ENCODE measurements at regions of chr1 and their contacts with region 1.

Region 1: DNA sequence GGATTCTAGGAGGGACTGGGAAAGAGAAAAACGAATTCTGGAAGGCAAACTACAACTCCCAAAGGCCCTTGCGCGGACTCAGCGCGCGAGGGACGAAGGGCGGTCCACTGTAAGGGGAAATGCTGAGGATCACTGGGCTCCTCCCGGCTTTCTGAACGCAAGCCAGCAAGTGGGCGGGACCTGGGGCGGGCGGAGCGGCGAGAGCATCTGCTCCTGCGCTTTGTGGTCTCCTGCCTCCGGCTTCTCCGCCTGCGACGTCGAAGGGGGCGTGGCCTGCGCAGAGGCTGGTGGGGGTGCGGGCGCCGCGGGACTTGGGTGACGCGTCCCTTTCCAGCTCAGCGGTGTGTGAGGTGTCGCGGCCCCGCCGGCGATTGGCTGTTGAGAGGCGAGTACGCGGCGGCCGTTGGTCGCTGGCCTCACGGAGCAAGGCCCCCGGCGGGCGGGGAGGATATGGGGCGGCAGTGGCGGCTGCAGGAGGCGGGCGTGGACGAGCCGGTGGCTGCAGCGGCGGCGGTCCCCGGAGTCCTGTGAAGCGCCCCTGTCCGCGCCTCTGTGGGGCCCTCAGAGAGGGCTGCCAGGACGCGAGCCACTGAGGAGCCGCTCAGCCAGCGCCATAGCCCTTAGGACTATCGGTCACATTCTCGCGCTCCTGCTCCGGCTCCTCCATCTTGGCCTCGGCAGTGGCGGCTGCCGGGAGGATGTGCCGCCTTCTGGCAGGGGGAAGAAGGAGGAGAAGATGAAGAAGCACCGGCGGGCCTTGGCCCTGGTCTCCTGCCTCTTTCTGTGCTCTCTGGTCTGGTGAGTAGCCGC is at the start of gene SUCO:
- DNase-seq: peak; percentile 99
- ATAC-seq: peak; percentile 82
- H3K4me3 Mint-ChIP-seq: peak within 1 kb of the TSS; percentile 98
- H3K27ac Mint-ChIP-seq: peak within 1 kb of the TSS; percentile 99
- H3K4me1 Mint-ChIP-seq: peaks cover 48% of the 10 kb centered on the region
- H3K27me3 Mint-ChIP-seq: peaks cover 4% of the 10 kb centered on the region
- CTCF ChIP-seq: no peak
- total RNA-seq, gene SUCO: 35.2 and 47.1 TPM in 2 replicates

Region 2: GRCh38 chr1:171485375-171486047 is 1047.4 kb before region 1 on chr1 and contains the start of gene PRRC2C:
- CTCF ChIA-PET with region 1: no interaction called
- POLR2A ChIA-PET with region 1: interaction called, 4 read pairs
- intact Hi-C with region 1: loop called (anchors 1 kb)
- DNase-seq: peak; percentile 81
- ATAC-seq: peak; percentile 86
- H3K4me3 Mint-ChIP-seq: peak within 1 kb of the TSS; percentile 94
- H3K27ac Mint-ChIP-seq: peak within 1 kb of the TSS; percentile 94
- H3K4me1 Mint-ChIP-seq: peaks cover 56% of the 10 kb centered on the region
- H3K27me3 Mint-ChIP-seq: no peaks in the 10 kb centered on the region
- CTCF ChIP-seq: no peak
- total RNA-seq, gene PRRC2C: 262 and 272 TPM in 2 replicates

Region 3: DNA sequence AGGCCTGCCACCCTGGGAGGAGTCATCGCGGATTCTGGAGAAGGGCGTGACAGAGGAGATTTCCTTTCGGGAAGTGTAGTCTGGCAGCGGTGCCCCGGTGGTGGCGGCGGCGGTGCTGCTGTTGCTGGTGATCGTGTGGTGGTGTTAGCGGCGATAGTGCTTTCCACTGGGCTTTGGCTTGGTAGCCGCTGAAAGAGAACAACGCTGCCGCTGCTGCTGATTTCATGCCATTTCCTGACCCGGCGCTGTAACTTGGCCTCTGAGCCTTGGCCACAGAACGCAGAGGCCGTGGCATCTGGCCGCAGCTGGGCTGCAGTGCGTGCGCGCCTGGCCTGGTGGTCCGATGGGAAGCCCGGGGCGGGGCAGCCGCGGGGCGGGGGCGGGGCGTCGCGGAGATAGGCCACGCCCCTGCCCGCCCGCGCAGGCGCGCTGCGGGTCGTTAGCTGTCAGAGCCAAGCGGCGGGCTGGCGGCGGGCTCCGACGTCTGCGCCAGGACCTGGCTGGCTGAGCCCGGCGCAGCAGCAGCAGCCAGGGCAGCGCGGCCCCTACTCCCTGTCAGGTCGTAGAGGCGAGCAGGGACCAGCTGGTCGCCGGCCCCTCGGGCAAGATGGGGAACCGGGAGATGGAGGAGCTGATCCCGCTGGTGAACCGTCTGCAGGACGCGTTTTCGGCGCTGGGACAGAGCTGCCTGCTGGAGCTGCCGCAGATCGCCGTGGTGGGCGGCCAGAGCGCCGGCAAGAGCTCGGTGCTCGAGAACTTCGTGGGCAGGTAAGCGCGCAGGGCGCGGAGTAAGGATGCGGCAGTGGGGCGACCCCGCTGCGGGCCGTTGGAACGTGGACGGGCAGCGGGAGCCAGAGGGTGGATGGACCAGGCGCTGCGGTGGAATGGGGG is 691.6 kb before region 1 on chr1 and contains the start of gene DNM3:
- CTCF ChIA-PET with region 1: no interaction called
- POLR2A ChIA-PET with region 1: interaction called, 3 read pairs
- intact Hi-C with region 1: loop called (anchors 5 kb)
- DNase-seq: peak; percentile 91
- ATAC-seq: peak; percentile 94
- H3K4me3 Mint-ChIP-seq: peak within 1 kb of the TSS; percentile 85
- H3K27ac Mint-ChIP-seq: peak within 1 kb of the TSS; percentile 36
- H3K4me1 Mint-ChIP-seq: peaks cover 18% of the 10 kb centered on the region
- H3K27me3 Mint-ChIP-seq: peaks cover 20% of the 10 kb centered on the region
- CTCF ChIP-seq: no peak
- total RNA-seq, gene DNM3: 1.9 and 2.1 TPM in 2 replicates

Region 4: GRCh38 chr1:172398970-172399755 is 133.7 kb before region 1 on chr1:
- CTCF ChIA-PET with region 1: no interaction called
- POLR2A ChIA-PET with region 1: interaction called, 4 read pairs
- intact Hi-C with region 1: loop called (anchors 1 kb)
- DNase-seq: no peak
- ATAC-seq: peak; percentile 50
- H3K4me3 Mint-ChIP-seq: peak overlapping the region; percentile 73
- H3K27ac Mint-ChIP-seq: peak overlapping the region; percentile 90
- H3K4me1 Mint-ChIP-seq: peaks cover 62% of the 10 kb centered on the region
- H3K27me3 Mint-ChIP-seq: no peaks in the 10 kb centered on the region
- CTCF ChIP-seq: no peak

Region 5: DNA sequence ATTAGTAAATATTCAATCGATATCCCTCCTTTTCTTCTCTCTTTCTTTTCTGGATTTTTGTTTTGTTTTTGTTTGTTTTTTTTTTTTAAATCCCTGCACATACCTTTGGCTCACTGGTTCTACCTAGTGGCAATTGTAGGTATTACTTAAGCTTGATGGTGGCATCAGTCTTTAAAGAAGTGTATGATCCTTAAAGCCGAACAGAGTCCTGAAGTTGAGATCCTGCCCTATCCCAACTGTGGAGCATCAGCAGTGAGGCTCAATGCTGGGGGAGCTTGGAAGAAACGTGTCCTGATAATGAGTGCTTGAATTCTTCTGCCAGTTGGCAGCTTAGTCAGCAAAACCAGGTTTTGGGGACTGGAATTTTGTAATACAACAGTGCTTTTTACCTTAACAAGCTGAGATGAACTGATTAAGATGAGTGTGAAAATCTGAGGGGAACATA is 186.8 kb after region 1 on chr1:
- CTCF ChIA-PET with region 1: interaction called, 3 read pairs
- POLR2A ChIA-PET with region 1: interaction called, 4 read pairs
- intact Hi-C with region 1: loop called (anchors 2 kb)
- DNase-seq: no peak
- ATAC-seq: peak; percentile 77
- H3K4me3 Mint-ChIP-seq: no peak overlapping the region
- H3K27ac Mint-ChIP-seq: peak overlapping the region; percentile 25
- H3K4me1 Mint-ChIP-seq: peaks cover 10% of the 10 kb centered on the region
- H3K27me3 Mint-ChIP-seq: no peaks in the 10 kb centered on the region
- CTCF ChIP-seq: peak; percentile 64

Region 6: GRCh38 chr1:173714759-173715537 is 1182.0 kb after region 1 on chr1 and contains the start of gene KLHL20:
- CTCF ChIA-PET with region 1: no interaction called
- POLR2A ChIA-PET with region 1: interaction called, 6 read pairs
- intact Hi-C with region 1: loop called (anchors 5 kb)
- DNase-seq: peak; percentile 71
- ATAC-seq: peak; percentile 96
- H3K4me3 Mint-ChIP-seq: peak within 1 kb of the TSS; percentile 93
- H3K27ac Mint-ChIP-seq: peak within 1 kb of the TSS; percentile 89
- H3K4me1 Mint-ChIP-seq: peaks cover 22% of the 10 kb centered on the region
- H3K27me3 Mint-ChIP-seq: peaks cover 14% of the 10 kb centered on the region
- CTCF ChIP-seq: no peak
- total RNA-seq, gene KLHL20: 19.6 and 26.1 TPM in 2 replicates

Region 7: GRCh38 chr1:174022080-174022975 is 1489.4 kb after region 1 on chr1 and contains the start of gene RC3H1:
- CTCF ChIA-PET with region 1: no interaction called
- POLR2A ChIA-PET with region 1: interaction called, 5 read pairs
- intact Hi-C with region 1: loop called (anchors 2 kb)
- DNase-seq: peak; percentile 88
- ATAC-seq: peak; percentile 93
- H3K4me3 Mint-ChIP-seq: peak within 1 kb of the TSS; percentile 97
- H3K27ac Mint-ChIP-seq: peak within 1 kb of the TSS; percentile 96
- H3K4me1 Mint-ChIP-seq: peaks cover 42% of the 10 kb centered on the region
- H3K27me3 Mint-ChIP-seq: no peaks in the 10 kb centered on the region
- CTCF ChIP-seq: no peak
- total RNA-seq, gene RC3H1: 45.6 and 55.6 TPM in 2 replicates